Panc1 (cell line): ENCODE measurements at regions of chrX and their contacts with region 1.

Region 1: DNA sequence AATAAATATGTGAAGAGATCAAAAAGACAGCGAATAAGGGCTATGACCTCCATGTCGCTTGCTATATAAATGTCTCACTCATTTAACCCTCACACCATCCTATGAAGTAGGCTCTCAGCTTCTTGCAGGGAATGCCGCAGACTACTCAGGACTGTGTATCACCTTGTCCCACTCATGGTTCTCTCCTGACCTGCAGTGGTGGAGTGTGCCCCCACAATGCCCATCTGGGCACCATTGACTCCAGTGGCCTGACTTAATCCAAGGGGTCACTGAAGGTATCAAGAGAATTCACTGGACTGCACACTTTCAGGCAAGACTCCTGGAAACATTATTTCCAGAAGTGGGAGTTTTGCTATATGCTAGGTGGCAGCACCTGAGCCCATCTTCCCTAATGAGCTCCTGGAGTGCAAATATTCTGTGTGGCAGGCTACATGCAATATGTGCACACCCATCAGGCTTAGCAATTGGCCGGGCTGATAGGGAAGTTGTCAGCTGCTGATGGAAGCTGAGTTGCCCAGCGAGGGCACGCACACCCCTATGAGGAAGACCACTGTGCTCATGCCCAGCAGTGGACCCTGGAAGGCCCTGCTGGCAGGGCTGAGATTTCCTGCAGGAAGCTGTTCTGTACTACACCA is 8.2 kb upstream of the EFNB1 start:
- DNase-seq: no peak
- ATAC-seq: no peak
- H3K4me3 ChIP-seq: no peak overlapping the region
- H3K27ac ChIP-seq: no peak overlapping the region
- H3K4me1 ChIP-seq: no peaks in the 10 kb centered on the region
- H3K27me3 ChIP-seq: no peaks in the 10 kb centered on the region
- CTCF ChIP-seq: no peak

Region 2: DNA sequence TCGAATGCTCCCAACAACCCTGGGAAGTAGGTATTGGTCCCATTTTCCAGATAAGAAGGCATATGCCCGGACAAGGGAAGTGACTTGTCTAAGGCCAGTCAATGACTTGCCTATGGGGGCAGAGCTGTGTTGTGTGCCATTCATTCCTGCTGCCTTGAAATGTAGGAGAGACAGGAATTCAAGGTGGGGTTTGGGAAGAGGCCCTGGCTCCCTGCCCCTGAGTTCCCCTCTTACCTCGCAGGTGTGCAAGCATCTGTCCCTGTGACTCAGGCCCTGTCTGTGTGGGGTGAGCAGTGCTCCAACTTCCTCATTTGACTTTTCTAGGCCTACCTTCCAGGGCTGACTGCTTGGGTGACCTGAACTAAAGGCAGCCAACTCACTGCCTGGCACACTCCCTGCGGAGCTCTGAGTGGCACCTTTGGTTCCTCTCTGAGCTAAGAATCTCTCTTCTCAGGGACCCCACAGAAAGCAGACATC is 13.3 kb after region 1 on chrX:
- CTCF ChIA-PET with region 1: no interaction called
- POLR2A ChIA-PET with region 1: no interaction called
- in situ Hi-C with region 1: no loop called
- intact Hi-C with region 1: no loop called
- DNase-seq: no peak
- ATAC-seq: no peak
- H3K4me3 ChIP-seq: no peak overlapping the region
- H3K27ac ChIP-seq: no peak overlapping the region
- H3K4me1 ChIP-seq: no peaks in the 10 kb centered on the region; the same call in none of the 2 replicates
- H3K27me3 ChIP-seq: no peaks in the 10 kb centered on the region
- CTCF ChIP-seq: no peak

Region 3: GRCh38 chrX:68929332-68930150 is 108.9 kb after region 1 on chrX:
- CTCF ChIA-PET with region 1: no interaction called
- POLR2A ChIA-PET with region 1: no interaction called
- in situ Hi-C with region 1: no loop called
- intact Hi-C with region 1: no loop called
- DNase-seq: no peak
- ATAC-seq: no peak
- H3K4me3 ChIP-seq: no peak overlapping the region
- H3K27ac ChIP-seq: no peak overlapping the region
- H3K4me1 ChIP-seq: no peaks in the 10 kb centered on the region
- H3K27me3 ChIP-seq: no peaks in the 10 kb centered on the region
- CTCF ChIP-seq: no peak

Region 4: DNA sequence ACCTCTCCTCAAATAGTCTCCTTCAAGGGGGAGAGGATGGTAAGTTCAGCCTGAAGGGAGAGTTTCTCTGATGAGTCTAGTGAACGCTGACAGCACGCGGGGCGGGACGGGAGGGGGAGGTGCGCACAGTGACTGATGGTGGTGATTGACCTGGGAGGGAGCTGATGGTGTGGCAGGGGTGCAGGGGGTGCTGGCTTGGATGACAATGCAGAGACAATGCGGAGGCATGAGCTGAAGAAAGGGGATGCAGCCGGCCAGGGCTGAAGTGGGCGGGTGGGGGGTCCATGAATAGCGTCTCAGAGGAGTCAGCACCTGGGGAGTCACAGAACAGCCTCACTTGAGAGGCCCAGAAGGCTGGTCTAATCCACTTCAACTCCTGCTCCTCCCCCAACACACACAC is 487.2 kb after region 1 on chrX:
- CTCF ChIA-PET with region 1: no interaction called
- POLR2A ChIA-PET with region 1: interaction called, 14 read pairs
- in situ Hi-C with region 1: no loop called
- intact Hi-C with region 1: no loop called
- DNase-seq: no peak
- ATAC-seq: no peak
- H3K4me3 ChIP-seq: no peak overlapping the region
- H3K27ac ChIP-seq: no peak overlapping the region
- H3K4me1 ChIP-seq: no peaks in the 10 kb centered on the region
- H3K27me3 ChIP-seq: no peaks in the 10 kb centered on the region
- CTCF ChIP-seq: no peak